IMR-90 (cell line): ENCODE measurements at regions of chr2 and their contacts with region 1.

Region 1: GRCh38 chr2:58762176-58762781 is 521.2 kb upstream of the FANCL start:
- DNase-seq: peak; percentile 28
- ATAC-seq: peak; percentile 78
- H3K4me3 ChIP-seq: no peak overlapping the region
- H3K27ac ChIP-seq: no peak overlapping the region
- H3K4me1 ChIP-seq: no peaks in the 10 kb centered on the region
- H3K27me3 ChIP-seq: no peaks in the 10 kb centered on the region
- CTCF ChIP-seq: peak; percentile 64
- POLR2A ChIP-seq: no peak
- RAD21 ChIP-seq: peak; percentile 73

Region 2: GRCh38 chr2:59025157-59025757 is 263.0 kb after region 1 on chr2:
- CTCF ChIA-PET with region 1: no interaction called
- POLR2A ChIA-PET with region 1: no interaction called
- dilution Hi-C with region 1: no loop called
- in situ Hi-C with region 1: no loop called
- intact Hi-C with region 1: loop called (anchors 1 kb)
- DNase-seq: peak; percentile 26
- ATAC-seq: peak; percentile 70
- H3K4me3 ChIP-seq: no peak overlapping the region
- H3K27ac ChIP-seq: no peak overlapping the region
- H3K4me1 ChIP-seq: no peaks in the 10 kb centered on the region
- H3K27me3 ChIP-seq: no peaks in the 10 kb centered on the region
- CTCF ChIP-seq: peak; percentile 59
- POLR2A ChIP-seq: no peak
- RAD21 ChIP-seq: peak; percentile 58

Region 3: DNA sequence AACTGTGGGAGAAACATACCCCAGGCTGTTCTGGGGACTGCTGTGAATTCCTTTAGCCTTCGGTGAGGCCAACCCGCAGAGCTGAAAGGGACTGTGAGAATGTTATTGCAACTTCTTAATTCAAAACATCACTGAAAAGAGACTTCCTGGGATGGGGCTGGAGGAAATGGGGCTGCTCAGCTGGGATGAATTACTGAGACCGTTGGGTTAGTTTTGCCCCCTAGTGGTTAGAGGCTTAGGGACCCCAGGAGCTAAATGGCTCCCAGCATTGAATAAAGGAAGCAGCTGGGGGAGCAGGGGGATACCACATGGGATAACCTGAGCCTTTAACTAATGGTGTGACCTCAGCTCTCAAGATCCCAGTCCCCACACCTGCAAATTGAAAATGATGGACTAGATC is 420.0 kb after region 1 on chr2:
- CTCF ChIA-PET with region 1: interaction called, 3 read pairs
- POLR2A ChIA-PET with region 1: no interaction called
- dilution Hi-C with region 1: no loop called
- in situ Hi-C with region 1: no loop called
- intact Hi-C with region 1: loop called (anchors 1 kb)
- DNase-seq: peak; percentile 15
- ATAC-seq: 0 out of 2 replicates have a peak, but pooled peaks have one; percentile 32
- H3K4me3 ChIP-seq: no peak overlapping the region
- H3K27ac ChIP-seq: no peak overlapping the region
- H3K4me1 ChIP-seq: no peaks in the 10 kb centered on the region
- H3K27me3 ChIP-seq: no peaks in the 10 kb centered on the region
- CTCF ChIP-seq: peak; percentile 52
- POLR2A ChIP-seq: no peak
- RAD21 ChIP-seq: peak; percentile 47